ENCODE measurements at regions of chr11 and their contacts with region 1.

Region 1: GRCh38 chr11:65711785-65712632 is at the start of gene KAT5:
- DNase-seq: peak; percentile 99
- H3K4me3 Mint-ChIP-seq: peak within 1 kb of the TSS; percentile 82
- H3K27ac Mint-ChIP-seq: peak within 1 kb of the TSS; percentile 97
- H3K4me1 Mint-ChIP-seq: peaks cover 35% of the 10 kb centered on the region
- H3K27me3 Mint-ChIP-seq: no peaks in the 10 kb centered on the region
- total RNA-seq, gene KAT5: 60.8 to 72.3 TPM

Region 2: GRCh38 chr11:65695456-65696241 is 16.4 kb before region 1 on chr11:
- CTCF ChIA-PET with region 1: interaction called, 19 read pairs
- POLR2A ChIA-PET with region 1: no interaction called
- DNase-seq: no peak
- H3K4me3 Mint-ChIP-seq: no peak overlapping the region
- H3K27ac Mint-ChIP-seq: no peak overlapping the region
- H3K4me1 Mint-ChIP-seq: peaks cover 3% of the 10 kb centered on the region
- H3K27me3 Mint-ChIP-seq: peaks cover 12% of the 10 kb centered on the region

Region 3: DNA sequence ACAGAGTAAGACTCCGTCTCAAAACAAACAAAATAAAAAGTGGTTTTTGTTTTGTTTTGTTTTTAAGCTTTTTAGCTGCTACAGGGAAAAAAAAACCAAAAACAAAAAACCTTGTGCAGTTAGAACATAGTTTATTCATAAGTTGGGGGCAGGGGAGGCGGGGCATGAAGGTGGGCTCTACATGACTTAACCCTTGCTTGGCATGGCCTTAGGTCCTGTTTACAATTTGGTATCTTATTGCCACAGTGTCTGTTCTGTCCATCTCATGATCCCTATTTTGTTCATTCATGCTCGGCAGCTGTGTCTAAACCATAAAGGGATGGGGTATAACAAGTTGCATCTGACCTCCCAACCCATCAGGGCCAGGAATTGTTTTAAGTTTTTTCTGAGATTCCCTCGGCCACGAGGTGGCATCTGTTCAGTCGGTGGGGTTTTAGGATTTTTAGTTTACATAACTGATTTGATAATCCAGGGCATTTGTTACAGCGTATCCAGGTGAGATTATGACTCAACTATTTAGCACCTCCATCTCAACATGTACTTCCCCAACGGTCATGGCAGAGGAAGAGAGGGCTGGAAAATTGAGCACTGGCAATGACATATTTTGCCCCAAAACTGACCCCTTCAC is 61.9 kb after region 1 on chr11:
- CTCF ChIA-PET with region 1: interaction called, 21 read pairs
- POLR2A ChIA-PET with region 1: no interaction called
- DNase-seq: no peak
- H3K4me3 Mint-ChIP-seq: no peak overlapping the region
- H3K27ac Mint-ChIP-seq: no peak overlapping the region
- H3K4me1 Mint-ChIP-seq: peaks cover 8% of the 10 kb centered on the region
- H3K27me3 Mint-ChIP-seq: no peaks in the 10 kb centered on the region

Region 4: DNA sequence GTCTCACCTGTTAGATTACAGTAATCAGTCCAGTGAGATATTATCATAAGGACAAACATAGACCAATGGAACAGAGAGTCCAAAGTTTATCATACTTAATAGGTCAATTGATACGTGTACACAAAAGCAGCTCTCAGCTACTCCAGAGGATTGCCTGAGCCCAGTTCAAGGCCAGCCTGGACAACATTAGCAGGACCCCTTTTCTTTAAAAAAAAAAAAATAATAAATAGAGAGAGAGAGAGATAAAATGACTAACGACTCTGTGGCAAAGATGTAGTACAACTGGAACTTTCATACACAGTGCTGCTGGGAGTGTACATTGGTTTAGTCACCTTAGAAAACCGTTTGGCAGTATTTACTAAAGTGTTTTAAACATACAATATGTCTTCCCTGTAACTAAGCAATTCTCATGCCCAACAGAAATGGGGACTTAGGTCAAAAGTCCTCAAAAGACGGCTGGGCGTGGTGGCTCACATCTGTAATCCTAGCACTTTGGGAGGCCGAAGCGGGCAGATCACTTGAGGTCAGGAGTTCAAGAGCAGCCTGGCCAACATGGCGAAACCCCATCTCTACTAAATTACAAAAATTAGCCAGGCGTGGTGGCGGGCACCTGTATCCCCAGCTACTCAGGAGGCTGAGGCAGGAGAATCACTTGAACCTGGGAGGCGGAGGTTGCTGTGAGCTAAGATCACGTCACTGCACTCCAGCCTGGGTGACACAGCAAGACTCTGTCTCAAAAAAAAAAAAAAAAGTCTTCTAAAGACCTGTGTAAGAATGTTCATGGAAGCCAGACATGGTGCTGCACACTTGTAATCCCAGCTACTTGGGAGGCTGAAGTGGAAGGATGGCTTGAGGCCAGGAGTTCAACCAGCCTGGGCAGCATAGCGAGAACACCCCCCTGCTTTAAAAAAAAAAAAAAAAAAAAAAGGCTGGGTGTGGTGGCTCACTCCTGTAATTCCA is 132.5 kb after region 1 on chr11:
- CTCF ChIA-PET with region 1: interaction called, 11 read pairs
- POLR2A ChIA-PET with region 1: no interaction called
- DNase-seq: no peak
- H3K4me3 Mint-ChIP-seq: no peak overlapping the region
- H3K27ac Mint-ChIP-seq: no peak overlapping the region
- H3K4me1 Mint-ChIP-seq: no peaks in the 10 kb centered on the region
- H3K27me3 Mint-ChIP-seq: no peaks in the 10 kb centered on the region

Region 5: DNA sequence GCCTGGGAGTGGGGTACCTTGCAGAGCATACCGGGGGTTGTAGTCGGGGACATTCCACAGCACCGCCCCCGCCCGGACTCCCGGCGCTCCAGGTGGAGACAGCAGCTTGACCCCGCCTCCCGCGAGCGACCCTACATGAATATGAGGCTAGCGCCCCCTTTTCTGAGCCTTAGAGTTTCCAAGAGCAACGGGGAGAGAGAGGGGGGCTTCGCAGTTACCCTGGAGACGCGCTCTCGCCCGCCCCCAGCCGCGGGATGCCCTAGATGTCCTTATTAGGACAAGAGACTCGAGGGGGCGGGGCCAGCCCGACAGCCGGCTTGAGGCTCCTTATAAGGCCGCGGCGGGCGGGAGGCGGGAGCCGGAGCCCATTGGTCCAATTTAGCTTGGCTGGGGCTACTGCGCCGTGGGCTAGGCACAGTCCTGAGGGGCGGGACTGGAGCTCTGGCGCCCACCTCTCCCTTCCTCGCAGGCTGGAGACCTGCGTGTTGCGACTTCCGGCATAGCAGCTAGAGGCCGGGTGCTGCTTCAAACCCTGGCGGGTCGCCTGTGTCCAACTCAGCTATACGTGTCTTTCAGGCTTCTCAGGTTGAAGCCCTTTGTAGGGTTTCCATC is 147.3 kb after region 1 on chr11:
- CTCF ChIA-PET with region 1: interaction called, 25 read pairs
- POLR2A ChIA-PET with region 1: no interaction called
- DNase-seq: peak; percentile 99
- H3K4me3 Mint-ChIP-seq: peak overlapping the region; percentile 97
- H3K27ac Mint-ChIP-seq: peak overlapping the region; percentile 99
- H3K4me1 Mint-ChIP-seq: peaks cover 54% of the 10 kb centered on the region
- H3K27me3 Mint-ChIP-seq: no peaks in the 10 kb centered on the region

Measured in activated CD4-positive, alpha-beta T cell treated with anti-CD3 and anti-CD28 coated beads, Interleukin-2, amount 10 ng/mL, durations not matched to agents 7 days and 5 days (primary cell).